ENCODE measurements at regions of chr10 and their contacts with region 1.

Region 1: DNA sequence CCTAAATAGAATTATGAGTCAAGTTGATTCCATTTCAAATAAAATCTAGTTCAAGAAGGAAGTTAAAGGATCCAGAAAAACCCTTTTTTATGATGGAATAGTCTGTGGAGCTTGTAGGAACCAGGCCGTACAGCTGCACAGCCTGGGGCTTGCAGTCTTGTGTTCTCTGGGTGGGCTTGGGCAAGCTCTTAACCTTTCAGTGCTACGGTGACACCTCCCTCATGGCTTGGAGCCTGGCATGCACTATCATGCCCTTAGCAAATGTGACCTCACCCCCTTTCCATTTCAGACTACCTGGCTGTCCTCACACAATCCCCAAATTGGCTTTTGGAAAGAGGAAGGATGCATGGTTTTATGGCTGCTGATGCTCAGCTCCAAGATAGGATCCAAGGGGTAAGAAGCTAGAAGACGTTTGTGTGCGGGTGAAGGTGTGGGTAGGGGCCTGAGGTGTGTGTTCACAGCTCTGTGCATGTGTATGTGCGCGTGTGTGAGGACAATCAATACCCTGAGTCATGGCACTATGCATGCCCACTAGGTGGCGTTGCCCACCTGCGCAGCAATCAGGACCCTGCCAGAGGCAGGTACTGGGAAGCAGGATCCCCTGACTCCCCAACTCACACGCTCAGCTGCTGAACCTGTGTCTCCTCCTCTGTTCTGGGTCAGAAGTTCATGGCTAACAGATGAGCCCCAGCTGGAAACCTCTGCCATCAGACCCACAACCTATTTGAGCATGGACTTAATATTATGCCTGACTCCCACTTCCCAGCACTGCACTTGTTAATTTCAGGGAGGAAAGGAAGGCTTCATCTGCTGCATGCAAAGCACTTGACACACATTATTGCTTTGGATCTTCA is 113.4 kb downstream of the PTPN20 start:
- DNase-seq: peak; percentile 83
- H3K4me3 ChIP-seq: no peak overlapping the region
- H3K27ac ChIP-seq: peak overlapping the region in 1 of 2 experiments; percentile 84; a peak in 2 of 4 replicates
- H3K4me1 ChIP-seq: peaks cover 0 to 46% of the 10 kb centered on the region in 2 experiments; a peak in 1 of 4 replicates
- H3K27me3 ChIP-seq: no peaks in the 10 kb centered on the region
- CTCF ChIP-seq: peak; percentile 78
- EP300 ChIP-seq: no peak
- RAD21 ChIP-seq: peak; percentile 93

Region 2: DNA sequence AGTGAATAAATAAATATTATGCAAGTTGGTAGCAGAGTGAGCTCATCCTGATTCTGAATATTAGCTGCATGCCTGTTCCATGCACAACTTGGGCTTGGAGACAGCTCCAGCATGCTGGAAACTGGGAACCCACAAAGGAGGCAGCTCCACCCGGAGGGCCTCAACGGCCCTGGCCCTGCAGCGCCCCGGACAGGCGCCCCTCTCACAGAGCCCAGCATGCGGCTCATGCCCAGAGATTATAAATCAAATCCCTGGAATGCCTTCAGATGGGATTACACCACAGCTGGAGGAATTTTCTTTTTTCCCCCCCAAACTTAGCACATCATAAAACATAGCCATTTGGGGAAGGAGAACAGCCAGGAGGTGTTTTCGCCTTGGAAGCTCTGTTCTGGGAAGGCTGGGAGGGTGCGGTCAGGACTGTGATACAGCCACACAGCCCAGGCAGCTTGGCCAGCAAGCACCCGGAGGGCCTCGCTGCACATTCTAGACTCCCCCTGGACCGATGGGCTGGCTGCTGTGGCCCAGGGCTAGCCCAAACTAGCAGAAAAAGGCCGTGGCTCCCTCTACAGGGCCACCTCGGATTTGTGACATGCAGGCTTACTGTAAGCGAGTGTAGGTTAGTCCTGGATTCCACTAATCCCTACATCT is 11.0 kb before region 1 on chr10:
- CTCF ChIA-PET with region 1: interaction called, 36 read pairs
- POLR2A ChIA-PET with region 1: interaction called, 3 read pairs
- DNase-seq: no peak
- H3K4me3 ChIP-seq: no peak overlapping the region
- H3K27ac ChIP-seq: no peak overlapping the region
- H3K4me1 ChIP-seq: no peaks in the 10 kb centered on the region; a peak in 1 of 4 replicates
- H3K27me3 ChIP-seq: no peaks in the 10 kb centered on the region
- CTCF ChIP-seq: no peak
- EP300 ChIP-seq: no peak
- RAD21 ChIP-seq: no peak

Region 3: DNA sequence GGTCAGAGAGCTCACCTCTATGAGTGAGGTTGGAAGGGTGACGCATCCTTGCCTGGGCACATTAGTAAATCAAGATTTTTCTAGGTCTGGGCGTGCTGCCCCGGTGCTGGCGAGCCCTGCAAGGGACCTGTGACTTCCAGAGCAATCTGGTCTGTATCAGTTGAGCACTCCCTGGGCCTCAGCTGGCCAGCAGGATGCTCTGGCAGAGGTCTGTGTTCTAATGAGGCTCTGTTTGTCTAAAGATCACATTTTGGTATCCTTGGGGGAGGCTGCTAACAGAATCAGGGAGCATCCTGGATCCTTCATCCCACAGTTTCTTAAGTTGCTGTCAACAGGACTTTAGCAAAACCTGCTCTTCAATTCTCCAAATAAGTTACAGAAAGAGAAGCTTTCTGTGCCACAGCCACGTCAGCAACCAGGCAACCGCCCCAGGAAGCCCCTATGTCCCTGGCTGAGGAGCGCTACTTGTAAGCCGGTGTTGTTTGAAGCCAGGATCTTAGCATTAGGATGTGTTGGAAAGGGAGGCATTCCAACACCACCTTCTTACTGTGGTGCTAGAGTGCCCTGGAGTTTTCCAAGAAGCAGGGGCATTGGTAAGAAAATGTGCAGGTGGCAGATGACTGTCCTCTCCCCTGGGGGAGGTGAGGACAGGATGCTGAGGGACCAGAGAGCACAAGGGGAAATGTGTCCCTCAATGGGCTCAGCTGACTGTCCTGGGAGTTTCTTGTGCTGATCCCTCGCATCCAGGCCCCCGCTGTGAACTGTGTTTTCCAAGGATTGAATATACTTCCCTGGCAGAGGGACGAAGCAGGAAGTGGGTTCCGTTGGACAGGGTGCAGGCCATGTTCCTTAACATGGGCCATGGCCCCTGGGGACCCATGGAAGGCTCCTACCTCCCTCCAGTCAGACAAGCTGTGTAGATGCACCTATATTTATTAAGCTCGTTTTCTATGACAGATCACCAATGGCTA is 135.6 kb after region 1 on chr10:
- CTCF ChIA-PET with region 1: interaction called, 14 read pairs
- POLR2A ChIA-PET with region 1: no interaction called
- DNase-seq: peak; percentile 39
- H3K4me3 ChIP-seq: no peak overlapping the region
- H3K27ac ChIP-seq: peak overlapping the region in 1 of 2 experiments; percentile 79; a peak in 1 of 4 replicates
- H3K4me1 ChIP-seq: peaks cover 0 to 23% of the 10 kb centered on the region in 2 experiments; a peak in 1 of 4 replicates
- H3K27me3 ChIP-seq: no peaks in the 10 kb centered on the region
- CTCF ChIP-seq: no peak
- EP300 ChIP-seq: peak in 1 of 2 experiments; percentile 59; a peak in 1 of 4 replicates
- RAD21 ChIP-seq: no peak

Region 4: DNA sequence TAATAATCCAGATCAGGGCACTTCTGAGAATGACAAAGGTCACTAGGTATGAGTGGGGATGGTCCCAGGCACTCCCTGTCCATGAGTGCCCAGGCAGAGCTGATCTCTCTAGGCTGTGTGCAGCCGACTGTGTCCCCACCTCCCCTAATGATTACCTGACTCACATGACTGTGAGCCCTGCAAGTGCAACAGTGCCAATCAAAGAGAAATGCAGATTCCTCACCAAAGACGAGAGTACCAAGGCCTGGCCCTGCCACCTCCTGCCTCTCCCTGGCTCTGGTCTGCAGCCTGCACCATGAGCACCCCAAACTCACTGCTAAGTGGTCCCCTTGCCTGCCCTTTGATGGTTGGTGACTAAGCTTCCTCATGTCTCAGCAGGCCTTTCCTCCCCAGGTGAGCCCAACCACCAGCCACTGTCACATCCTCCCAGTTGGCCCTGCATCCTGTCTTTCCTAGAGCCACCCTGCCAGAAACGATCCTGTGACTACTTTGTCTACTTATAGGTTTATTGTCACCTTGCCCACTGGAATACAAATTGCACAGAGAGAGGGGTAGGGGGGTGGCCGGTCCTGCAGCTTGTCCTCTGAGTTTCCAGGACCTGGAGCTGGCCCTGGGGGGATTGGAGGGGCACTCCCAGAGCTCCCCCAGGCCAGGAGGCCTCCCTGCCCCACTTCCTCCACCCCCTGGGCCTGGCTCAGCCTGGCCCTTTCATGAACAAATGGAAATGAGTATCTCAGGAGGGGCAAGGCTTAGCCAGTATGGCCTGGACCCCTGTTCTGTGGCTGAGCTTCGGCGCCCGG is 252.9 kb after region 1 on chr10:
- CTCF ChIA-PET with region 1: interaction called, 18 read pairs
- POLR2A ChIA-PET with region 1: no interaction called
- DNase-seq: no peak
- H3K4me3 ChIP-seq: no peak overlapping the region
- H3K27ac ChIP-seq: no peak overlapping the region
- H3K4me1 ChIP-seq: peaks cover 0 to 9% of the 10 kb centered on the region in 2 experiments; a peak in 1 of 4 replicates
- H3K27me3 ChIP-seq: no peaks in the 10 kb centered on the region
- CTCF ChIP-seq: no peak
- EP300 ChIP-seq: no peak
- RAD21 ChIP-seq: no peak

Region 5: DNA sequence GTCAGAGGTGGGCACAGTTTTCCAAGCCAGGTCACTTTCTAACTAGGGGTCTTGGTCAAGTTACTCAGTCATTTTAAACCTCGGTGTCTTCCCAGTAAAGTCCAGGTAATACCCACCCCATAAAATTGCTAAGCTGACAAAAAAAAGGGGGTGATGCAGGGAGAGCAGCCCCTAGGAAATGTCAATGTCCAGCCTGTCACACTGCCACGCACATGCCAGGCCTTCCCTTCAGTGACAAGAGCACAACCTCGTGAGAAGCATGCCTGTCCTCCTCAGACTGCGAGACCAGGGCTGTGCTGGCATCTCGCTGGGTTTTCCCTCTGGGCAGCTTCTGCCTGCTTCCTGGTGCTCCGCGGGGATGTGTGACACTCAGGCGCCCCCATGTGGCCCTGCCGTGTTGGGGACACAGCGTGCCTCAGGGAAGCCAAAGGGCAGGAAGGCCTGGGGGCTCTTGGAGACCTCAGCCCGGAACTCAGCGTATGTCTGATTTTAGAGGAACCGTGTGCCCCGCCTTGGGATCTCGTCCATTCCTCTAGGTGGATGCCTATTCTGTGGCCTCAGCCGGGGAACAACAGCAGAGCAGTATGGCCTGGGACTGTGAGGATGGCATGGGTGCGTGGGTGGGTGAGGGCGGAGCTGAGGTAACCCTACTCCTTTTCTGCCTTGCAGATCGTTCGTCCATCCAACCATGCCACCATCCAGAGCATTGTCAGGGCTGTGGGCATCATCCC is 287.5 kb after region 1 on chr10:
- CTCF ChIA-PET with region 1: interaction called, 337 read pairs
- POLR2A ChIA-PET with region 1: interaction called, 4 read pairs
- DNase-seq: peak; percentile 90
- H3K4me3 ChIP-seq: peak overlapping the region in 1 of 2 experiments; percentile 46; a peak in 1 of 4 replicates
- H3K27ac ChIP-seq: peak overlapping the region in 1 of 2 experiments; percentile 36; a peak in 2 of 4 replicates
- H3K4me1 ChIP-seq: peaks cover 0 to 51% of the 10 kb centered on the region in 2 experiments; a peak in 1 of 4 replicates
- H3K27me3 ChIP-seq: no peaks in the 10 kb centered on the region
- CTCF ChIP-seq: peak; percentile 80
- EP300 ChIP-seq: no peak
- RAD21 ChIP-seq: peak; percentile 97

Region 6: DNA sequence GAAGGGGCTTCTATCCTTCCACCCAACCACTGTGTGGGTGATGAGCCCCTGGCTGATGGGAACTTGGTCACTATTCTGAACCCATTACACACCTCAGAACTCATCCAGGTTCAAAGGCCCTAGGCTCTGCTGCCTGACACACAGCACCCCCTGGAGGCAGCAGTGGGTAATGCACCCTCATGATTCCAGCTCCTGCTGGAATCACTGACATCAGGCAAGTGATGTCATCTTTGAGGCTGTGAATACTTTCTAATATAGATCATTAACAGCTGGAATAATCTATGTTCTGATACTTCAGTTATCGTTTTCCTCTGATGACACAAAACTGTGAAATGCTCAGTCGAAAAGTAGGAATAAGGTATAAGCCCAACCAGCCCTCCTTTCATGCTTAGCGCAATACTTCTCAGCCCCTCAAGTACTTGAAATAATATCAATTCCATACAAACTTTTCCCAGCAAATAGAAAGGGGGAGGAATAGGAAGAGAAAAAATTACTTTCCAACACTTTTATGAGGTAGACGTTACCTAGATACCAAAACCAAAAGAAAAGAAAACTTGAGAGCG is 316.1 kb after region 1 on chr10:
- CTCF ChIA-PET with region 1: interaction called, 31 read pairs
- POLR2A ChIA-PET with region 1: no interaction called
- DNase-seq: peak; percentile 83
- H3K4me3 ChIP-seq: peak overlapping the region in 1 of 2 experiments; percentile 46; a peak in 1 of 4 replicates
- H3K27ac ChIP-seq: no peak overlapping the region; a peak in 1 of 4 replicates
- H3K4me1 ChIP-seq: peaks cover 0 to 10% of the 10 kb centered on the region in 2 experiments; a peak in 1 of 4 replicates
- H3K27me3 ChIP-seq: peaks cover 32% of the 10 kb centered on the region
- CTCF ChIP-seq: peak; percentile 94
- EP300 ChIP-seq: no peak
- RAD21 ChIP-seq: peak; percentile 84

Measured in SK-N-SH (cell line).